Activated naive CD4-positive, alpha-beta T cell treated with anti-CD3 and anti-CD28 coated beads for 36 hours (primary cell): ENCODE measurements at regions of chr12 and their contacts with region 1.

Region 1: GRCh38 chr12:118357257-118358007 is 15.3 kb downstream of the TAOK3 start:
- DNase-seq: peak; percentile 78
- H3K4me3 Mint-ChIP-seq: peak overlapping the region; percentile 73
- H3K27ac Mint-ChIP-seq: peak overlapping the region; percentile 90
- H3K4me1 Mint-ChIP-seq: peaks cover 55% of the 10 kb centered on the region
- H3K27me3 Mint-ChIP-seq: no peaks in the 10 kb centered on the region

Region 2: GRCh38 chr12:118061011-118061875 is 296.2 kb before region 1 on chr12 and contains the start of gene WSB2:
- CTCF ChIA-PET with region 1: no interaction called
- intact Hi-C with region 1: loop called (anchors 5 kb)
- DNase-seq: peak; percentile 51
- H3K4me3 Mint-ChIP-seq: peak within 1 kb of the TSS; percentile 90
- H3K27ac Mint-ChIP-seq: peak within 1 kb of the TSS; percentile 91
- H3K4me1 Mint-ChIP-seq: peaks cover 45% of the 10 kb centered on the region
- H3K27me3 Mint-ChIP-seq: peaks cover 5% of the 10 kb centered on the region
- total RNA-seq, gene WSB2: 31.0 to 31.7 TPM

Region 3: GRCh38 chr12:118183705-118184104 is 173.7 kb before region 1 on chr12:
- CTCF ChIA-PET with region 1: interaction called, 9 read pairs
- intact Hi-C with region 1: loop called (anchors 1 kb)
- DNase-seq: no peak
- H3K4me3 Mint-ChIP-seq: no peak overlapping the region
- H3K27ac Mint-ChIP-seq: no peak overlapping the region
- H3K4me1 Mint-ChIP-seq: peaks cover 18% of the 10 kb centered on the region
- H3K27me3 Mint-ChIP-seq: no peaks in the 10 kb centered on the region

Region 4: DNA sequence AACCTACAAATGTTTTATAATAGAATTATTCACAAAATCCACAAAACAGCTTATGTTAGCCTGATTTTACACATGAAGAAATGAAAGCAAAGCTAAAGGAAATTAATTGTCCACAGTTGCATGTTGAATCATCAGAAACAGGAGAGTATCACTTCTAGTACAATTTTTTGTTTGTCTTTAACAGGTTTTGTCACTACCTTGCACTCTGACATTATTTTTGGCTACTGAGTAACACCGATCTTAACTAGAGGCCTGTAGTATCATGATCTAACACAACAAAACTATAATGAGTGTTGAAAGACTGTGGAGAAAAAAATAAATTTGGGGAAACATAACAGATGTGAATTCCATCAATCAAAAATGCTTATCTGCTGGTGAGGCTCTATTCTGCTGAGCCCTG is 44.9 kb before region 1 on chr12:
- CTCF ChIA-PET with region 1: interaction called, 4 read pairs
- intact Hi-C with region 1: loop called (anchors 1 kb)
- DNase-seq: no peak
- H3K4me3 Mint-ChIP-seq: no peak overlapping the region
- H3K27ac Mint-ChIP-seq: no peak overlapping the region
- H3K4me1 Mint-ChIP-seq: peaks cover 38% of the 10 kb centered on the region
- H3K27me3 Mint-ChIP-seq: no peaks in the 10 kb centered on the region

Region 5: GRCh38 chr12:118773956-118774723 is 416.7 kb after region 1 on chr12:
- CTCF ChIA-PET with region 1: no interaction called
- intact Hi-C with region 1: no loop called
- DNase-seq: no peak
- H3K4me3 Mint-ChIP-seq: no peak overlapping the region
- H3K27ac Mint-ChIP-seq: no peak overlapping the region
- H3K4me1 Mint-ChIP-seq: no peaks in the 10 kb centered on the region
- H3K27me3 Mint-ChIP-seq: peaks cover 27% of the 10 kb centered on the region